Posterior vena cava (tissue), 2 donors: ENCODE measurements at regions of chr18 and their contacts with region 1.

Region 1: DNA sequence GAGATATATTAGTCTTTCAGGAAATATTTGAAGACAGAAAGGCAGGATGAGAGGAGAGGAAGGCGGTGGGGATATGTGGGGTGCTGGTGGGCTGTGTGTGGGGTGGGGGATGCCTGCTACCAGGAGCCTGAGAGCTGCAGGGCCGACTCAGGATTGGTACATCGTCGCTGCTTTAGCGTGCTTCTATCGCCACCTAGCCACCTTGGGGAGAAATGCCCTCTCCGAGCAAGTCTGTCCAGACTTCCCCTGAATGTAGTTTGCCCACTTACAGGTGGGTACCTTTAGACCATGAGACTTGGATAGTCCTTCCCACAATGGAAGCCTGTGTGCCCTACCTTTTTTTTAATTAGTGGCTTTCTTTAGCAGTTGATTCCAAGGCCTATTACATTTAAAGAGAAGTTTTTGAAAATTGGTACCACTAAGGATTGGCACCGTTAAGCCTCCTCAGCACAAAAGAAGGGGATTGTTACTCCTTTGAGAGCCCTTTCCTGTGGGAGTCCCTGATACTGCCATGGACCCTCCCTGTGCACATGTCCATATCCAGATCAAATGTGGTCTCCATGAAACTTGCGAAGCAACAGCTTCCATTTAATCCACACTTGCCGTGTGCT is 114.1 kb upstream of the NDUFV2 start:
- DNase-seq: no peak

Region 2: DNA sequence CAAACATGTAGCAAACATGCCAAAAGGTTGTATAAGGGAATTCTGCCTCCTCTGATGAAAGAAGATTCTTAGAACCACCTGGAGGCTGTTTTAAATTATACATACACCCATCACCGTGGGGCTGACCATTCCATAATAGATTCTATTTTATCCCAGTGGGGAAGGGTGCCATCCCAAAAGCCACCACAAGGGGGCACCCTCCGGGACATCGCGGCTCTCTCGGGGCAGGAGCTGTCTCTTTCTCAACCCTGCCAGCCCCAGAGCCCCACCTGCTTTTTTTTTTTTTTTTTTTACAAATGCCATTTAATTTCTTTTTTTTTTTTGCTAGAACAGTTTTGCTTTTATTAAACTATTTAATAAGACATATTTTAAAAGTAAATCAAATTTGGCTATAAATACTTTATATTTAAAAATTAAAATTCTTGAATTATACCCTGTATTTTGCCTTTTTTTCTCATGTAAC is 291.6 kb before region 1 on chr18:
- intact Hi-C with region 1: loop called (anchors 5 to 10 kb)
- DNase-seq: peak; percentile 92

Region 3: DNA sequence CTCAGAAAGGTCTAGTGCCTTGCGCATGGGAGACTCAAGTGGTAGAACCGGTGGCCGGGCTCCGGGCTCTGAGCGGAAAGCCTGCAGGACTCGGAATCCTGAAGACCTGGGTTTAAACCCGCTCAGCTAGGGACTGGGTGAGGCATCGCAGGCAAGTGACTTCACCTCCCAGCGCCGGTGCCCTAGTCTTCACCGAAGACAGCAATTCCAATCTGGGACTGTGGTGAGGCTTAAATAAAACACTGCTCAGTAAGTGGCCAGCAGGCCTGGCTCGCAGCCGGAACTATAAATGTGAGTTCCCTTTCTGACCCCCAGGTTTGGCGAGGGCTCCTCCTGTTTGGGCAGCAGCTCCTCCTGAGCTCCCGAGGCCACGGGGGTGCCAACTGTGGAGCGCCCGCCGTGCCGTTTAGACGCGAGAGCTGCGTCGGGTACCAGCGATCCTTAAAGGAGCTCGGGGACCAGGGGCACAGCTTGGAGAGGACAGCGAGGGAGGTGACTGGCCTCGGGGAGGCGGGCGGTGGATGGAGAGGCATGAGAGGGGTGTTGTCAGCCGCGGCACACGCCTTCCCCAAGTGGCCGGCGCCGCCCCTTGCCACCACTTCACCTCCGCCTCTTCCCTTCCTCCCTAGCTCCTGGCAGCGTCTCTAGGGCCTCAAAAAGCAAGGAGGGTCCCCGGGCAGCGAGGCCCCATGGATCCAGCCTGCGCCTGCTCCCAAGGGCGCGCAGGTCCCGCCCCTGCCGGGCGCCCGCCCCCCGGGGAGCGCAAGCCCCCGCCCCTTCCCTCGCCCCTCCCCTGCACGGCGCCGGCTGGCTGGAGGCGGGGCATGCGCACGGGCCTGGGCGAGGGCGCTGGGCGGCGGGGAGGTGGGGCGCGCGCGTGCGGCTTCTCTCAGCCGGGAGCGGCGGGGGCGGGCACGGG is 283.7 kb before region 1 on chr18:
- intact Hi-C with region 1: loop called (anchors 5 to 10 kb)
- DNase-seq: peak; percentile 95

Region 4: DNA sequence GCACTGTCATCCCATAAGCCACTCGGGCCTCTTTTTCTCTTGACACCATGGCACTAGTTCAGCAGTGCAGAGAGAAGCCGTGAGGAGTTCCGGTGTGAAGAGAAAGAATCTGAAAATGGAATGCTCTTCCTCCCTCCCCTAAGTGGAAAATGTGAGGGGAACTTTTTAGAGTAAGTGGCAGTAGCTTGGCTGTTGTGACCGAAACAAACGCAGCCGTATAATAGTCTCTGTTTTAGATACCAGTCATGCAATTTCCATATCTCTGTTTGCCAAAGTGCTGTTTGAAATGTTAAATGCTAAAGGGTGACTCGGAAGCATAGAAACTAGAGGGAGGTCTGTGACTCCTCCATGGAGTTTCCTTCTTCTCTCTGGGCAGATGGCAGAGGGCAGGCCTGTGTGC is 160.1 kb before region 1 on chr18:
- intact Hi-C with region 1: loop called in 1 of 2 experiments (anchors 10 kb)
- DNase-seq: no peak

Region 5: DNA sequence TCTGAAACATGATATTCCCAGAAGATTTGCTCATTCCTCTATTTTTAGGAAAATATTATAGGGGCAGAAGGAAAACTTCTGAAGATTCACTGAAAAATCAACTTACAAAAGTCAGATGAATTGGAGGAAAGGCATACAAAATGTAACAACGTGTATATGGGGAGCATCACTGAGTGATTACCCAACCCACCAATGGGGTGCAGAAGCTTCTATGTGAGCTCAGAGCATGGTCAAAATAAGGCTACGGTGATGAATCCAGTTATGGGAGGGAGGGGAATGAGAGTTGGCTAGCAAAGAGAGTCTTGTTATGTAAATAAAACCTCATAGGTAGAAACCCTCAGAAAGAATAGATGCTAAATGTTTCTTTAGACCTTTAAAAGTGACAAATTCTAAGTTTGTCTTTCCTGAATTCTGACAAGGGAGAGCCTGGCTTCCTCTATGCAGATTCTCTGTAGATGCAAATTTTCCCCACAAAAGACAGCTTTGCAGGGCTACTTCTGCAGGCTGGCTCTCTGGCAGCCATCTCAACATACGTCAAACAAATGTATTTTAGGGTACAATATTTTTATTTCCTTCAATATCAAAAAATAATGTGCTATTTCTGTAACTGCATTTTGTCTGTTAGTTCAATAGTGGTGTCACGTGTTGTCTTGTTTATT is 57.2 kb before region 1 on chr18:
- intact Hi-C with region 1: loop called in 1 of 2 experiments (anchors 10 kb)
- DNase-seq: no peak